ENCODE measurements at regions of chr17 and their contacts with region 1.

Region 1: GRCh38 chr17:40536295-40537171 is 28.7 kb downstream of the CCR7 start:
- DNase-seq: no peak
- ATAC-seq: no peak
- H3K4me3 ChIP-seq: no peak overlapping the region
- H3K4me3 Mint-ChIP-seq: no peak overlapping the region
- H3K27ac ChIP-seq: no peak overlapping the region
- H3K27ac Mint-ChIP-seq: peak overlapping the region; percentile 78
- H3K4me1 ChIP-seq: peaks cover 47 to 77% of the 10 kb centered on the region in 2 donors
- H3K4me1 Mint-ChIP-seq: peaks cover 78% of the 10 kb centered on the region
- H3K27me3 ChIP-seq: no peaks in the 10 kb centered on the region
- H3K27me3 Mint-ChIP-seq: no peaks in the 10 kb centered on the region
- CTCF ChIP-seq: no peak

Region 2: DNA sequence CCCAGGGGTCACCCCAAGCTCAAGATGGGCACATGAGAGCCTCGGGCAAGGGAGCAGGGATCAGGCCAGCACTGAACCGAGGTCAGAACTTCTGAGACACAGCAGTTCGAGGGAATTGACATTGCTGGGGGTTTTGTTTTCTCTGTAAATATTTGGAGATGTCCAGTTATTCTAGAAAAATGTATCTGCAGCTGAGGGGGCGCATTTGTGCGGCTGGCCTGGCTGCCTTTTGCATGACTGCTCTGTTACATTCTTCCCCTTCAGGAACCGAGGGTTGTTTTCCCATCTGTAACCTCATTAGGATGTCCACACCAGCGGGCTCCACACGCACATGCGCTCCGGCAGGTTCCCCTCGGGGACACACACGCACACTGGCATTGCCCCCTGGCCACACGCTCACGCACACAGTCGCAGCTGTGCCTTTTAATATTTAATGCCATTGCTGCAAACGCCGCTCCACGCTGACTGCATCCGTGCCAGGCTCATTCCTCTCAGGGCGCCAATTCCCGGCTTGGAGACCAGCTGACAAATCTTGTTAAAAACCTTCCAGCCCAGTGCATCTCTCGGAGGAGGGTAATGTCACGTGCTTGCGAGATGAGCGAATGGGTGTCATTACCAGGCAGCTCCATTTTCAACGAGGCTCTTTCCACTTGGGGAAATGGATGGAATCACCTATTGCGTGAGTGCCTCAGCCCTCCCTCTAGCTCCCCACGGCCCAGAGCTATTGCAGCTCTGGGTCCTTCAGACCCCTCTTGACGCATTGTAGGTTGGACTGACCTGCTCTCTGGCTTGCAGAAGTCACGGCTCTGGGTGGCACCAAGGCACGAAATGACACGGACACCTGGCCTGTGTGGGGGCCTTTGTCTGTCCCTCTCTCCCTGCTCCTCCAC is 15.6 kb after region 1 on chr17:
- CTCF ChIA-PET with region 1: interaction called, 329 read pairs
- POLR2A ChIA-PET with region 1: interaction called, 60 read pairs
- intact Hi-C with region 1: loop called (anchors 2 kb)
- DNase-seq: peak; percentile 52
- ATAC-seq: no peak
- H3K4me3 ChIP-seq: no peak overlapping the region
- H3K4me3 Mint-ChIP-seq: peak overlapping the region; percentile 84
- H3K27ac ChIP-seq: peak overlapping the region; percentile 83 to 98
- H3K27ac Mint-ChIP-seq: peak overlapping the region; percentile 92
- H3K4me1 ChIP-seq: peaks cover 98 to 100% of the 10 kb centered on the region in 2 donors
- H3K4me1 Mint-ChIP-seq: peaks cover 100% of the 10 kb centered on the region
- H3K27me3 ChIP-seq: no peaks in the 10 kb centered on the region
- H3K27me3 Mint-ChIP-seq: no peaks in the 10 kb centered on the region
- CTCF ChIP-seq: no peak

Region 3: DNA sequence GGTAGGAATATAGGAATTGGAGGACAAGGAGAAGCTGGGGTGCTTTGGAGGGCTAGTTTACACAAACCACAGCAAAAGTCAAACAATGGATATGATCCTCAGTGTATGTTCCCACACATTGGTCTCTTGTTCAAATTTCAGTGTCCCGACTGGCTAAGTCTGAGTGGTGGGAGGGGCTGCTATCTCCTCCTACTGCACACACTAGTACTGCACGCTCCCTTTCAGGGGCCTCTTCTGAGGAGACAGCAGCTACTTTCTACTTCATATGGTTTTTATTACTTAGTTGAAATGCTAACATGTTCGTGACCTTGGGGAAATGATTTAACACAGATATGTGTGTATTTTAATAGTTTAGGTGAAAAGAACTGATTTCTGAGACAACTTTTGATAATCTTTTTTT is 304.7 kb after region 1 on chr17:
- CTCF ChIA-PET with region 1: no interaction called
- POLR2A ChIA-PET with region 1: no interaction called
- intact Hi-C with region 1: no loop called
- DNase-seq: no peak
- ATAC-seq: no peak
- H3K4me3 ChIP-seq: no peak overlapping the region
- H3K4me3 Mint-ChIP-seq: no peak overlapping the region
- H3K27ac ChIP-seq: no peak overlapping the region
- H3K27ac Mint-ChIP-seq: no peak overlapping the region
- H3K4me1 ChIP-seq: no peaks in the 10 kb centered on the region
- H3K4me1 Mint-ChIP-seq: peaks cover 3% of the 10 kb centered on the region
- H3K27me3 ChIP-seq: peaks cover 0 to 25% (median 6%) of the 10 kb centered on the region in 4 experiments
- H3K27me3 Mint-ChIP-seq: peaks cover 53% of the 10 kb centered on the region
- CTCF ChIP-seq: no peak

Measured in B cell (primary cell).